ENCODE measurements at regions of chr6 and their contacts with region 1.

Region 1: GRCh38 chr6:112043032-112044007 is 10.6 kb upstream of the CCN6 start:
- DNase-seq: peak; percentile 85 to 95 (median 91)
- ATAC-seq: peak; percentile 92
- H3K4me3 ChIP-seq: peak overlapping the region; percentile 65
- H3K4me3 Mint-ChIP-seq: peak overlapping the region; percentile 97
- H3K27ac ChIP-seq: peak overlapping the region; percentile 88 to 95
- H3K27ac Mint-ChIP-seq: peak overlapping the region; percentile 100
- H3K4me1 ChIP-seq: peaks cover 3% of the 10 kb centered on the region
- H3K4me1 Mint-ChIP-seq: peaks cover 40% of the 10 kb centered on the region
- H3K27me3 ChIP-seq: no peaks in the 10 kb centered on the region
- H3K27me3 Mint-ChIP-seq: no peaks in the 10 kb centered on the region
- CTCF ChIP-seq: peak; percentile 78

Region 2: GRCh38 chr6:110999634-111000270 is 1043.6 kb before region 1 on chr6:
- CTCF ChIA-PET with region 1: no interaction called
- POLR2A ChIA-PET with region 1: no interaction called
- intact Hi-C with region 1: loop called in 1 of 2 experiments (anchors 10 kb)
- DNase-seq: peak in 3 of 14 experiments; percentile 47 to 56 (median 54)
- ATAC-seq: no peak
- H3K4me3 ChIP-seq: no peak overlapping the region
- H3K4me3 Mint-ChIP-seq: no peak overlapping the region
- H3K27ac ChIP-seq: no peak overlapping the region
- H3K27ac Mint-ChIP-seq: no peak overlapping the region
- H3K4me1 ChIP-seq: no peaks in the 10 kb centered on the region
- H3K4me1 Mint-ChIP-seq: no peaks in the 10 kb centered on the region
- H3K27me3 ChIP-seq: no peaks in the 10 kb centered on the region
- H3K27me3 Mint-ChIP-seq: no peaks in the 10 kb centered on the region
- CTCF ChIP-seq: peak; percentile 50

Region 3: DNA sequence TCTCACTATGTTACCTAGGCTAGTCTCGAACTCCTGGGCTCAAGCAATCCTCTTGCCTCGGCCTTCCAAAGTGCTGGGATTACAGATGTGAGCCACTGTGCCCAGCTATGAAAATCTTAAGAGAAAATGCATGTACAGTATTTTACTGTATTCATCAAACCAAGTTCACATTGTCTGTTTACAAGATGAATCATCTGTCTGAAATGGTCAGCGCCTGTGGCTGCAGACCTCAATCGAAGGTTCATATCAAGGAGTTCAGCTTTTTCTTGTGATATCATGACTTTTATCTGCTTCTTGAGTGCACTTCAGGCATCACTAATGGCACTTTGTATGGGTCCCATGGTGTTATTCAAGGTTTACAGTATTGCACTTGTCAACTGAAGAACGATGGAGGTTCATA is 800.9 kb before region 1 on chr6:
- CTCF ChIA-PET with region 1: no interaction called
- POLR2A ChIA-PET with region 1: no interaction called
- intact Hi-C with region 1: no loop called
- DNase-seq: no peak
- ATAC-seq: no peak
- H3K4me3 ChIP-seq: no peak overlapping the region
- H3K4me3 Mint-ChIP-seq: no peak overlapping the region
- H3K27ac ChIP-seq: no peak overlapping the region
- H3K27ac Mint-ChIP-seq: no peak overlapping the region
- H3K4me1 ChIP-seq: no peaks in the 10 kb centered on the region
- H3K4me1 Mint-ChIP-seq: no peaks in the 10 kb centered on the region
- H3K27me3 ChIP-seq: no peaks in the 10 kb centered on the region
- H3K27me3 Mint-ChIP-seq: no peaks in the 10 kb centered on the region
- CTCF ChIP-seq: no peak

Region 4: GRCh38 chr6:111259089-111259831 is 784.1 kb before region 1 on chr6:
- CTCF ChIA-PET with region 1: interaction called, 5 read pairs
- POLR2A ChIA-PET with region 1: interaction called, 19 read pairs
- intact Hi-C with region 1: loop called (anchors 1 kb)
- DNase-seq: peak; percentile 98 to 100 (median 99)
- ATAC-seq: peak; percentile 95
- H3K4me3 ChIP-seq: peak overlapping the region; percentile 60
- H3K4me3 Mint-ChIP-seq: peak overlapping the region; percentile 90
- H3K27ac ChIP-seq: peak overlapping the region; percentile 78 to 89
- H3K27ac Mint-ChIP-seq: peak overlapping the region; percentile 87
- H3K4me1 ChIP-seq: peaks cover 28% of the 10 kb centered on the region
- H3K4me1 Mint-ChIP-seq: peaks cover 35% of the 10 kb centered on the region
- H3K27me3 ChIP-seq: no peaks in the 10 kb centered on the region
- H3K27me3 Mint-ChIP-seq: no peaks in the 10 kb centered on the region
- CTCF ChIP-seq: peak; percentile 96

Region 5: GRCh38 chr6:111764238-111765175 is 278.8 kb before region 1 on chr6:
- CTCF ChIA-PET with region 1: no interaction called
- POLR2A ChIA-PET with region 1: interaction called, 5 read pairs
- intact Hi-C with region 1: loop called in 1 of 2 experiments (anchors 5 kb)
- DNase-seq: peak in 10 of 14 experiments; percentile 25 to 87 (median 44)
- ATAC-seq: peak; percentile 24
- H3K4me3 ChIP-seq: peak overlapping the region; percentile 19
- H3K4me3 Mint-ChIP-seq: peak overlapping the region; percentile 83
- H3K27ac ChIP-seq: peak overlapping the region; percentile 70 to 71
- H3K27ac Mint-ChIP-seq: peak overlapping the region; percentile 99
- H3K4me1 ChIP-seq: peaks cover 89% of the 10 kb centered on the region
- H3K4me1 Mint-ChIP-seq: peaks cover 99% of the 10 kb centered on the region
- H3K27me3 ChIP-seq: no peaks in the 10 kb centered on the region
- H3K27me3 Mint-ChIP-seq: no peaks in the 10 kb centered on the region
- CTCF ChIP-seq: no peak

Region 6: DNA sequence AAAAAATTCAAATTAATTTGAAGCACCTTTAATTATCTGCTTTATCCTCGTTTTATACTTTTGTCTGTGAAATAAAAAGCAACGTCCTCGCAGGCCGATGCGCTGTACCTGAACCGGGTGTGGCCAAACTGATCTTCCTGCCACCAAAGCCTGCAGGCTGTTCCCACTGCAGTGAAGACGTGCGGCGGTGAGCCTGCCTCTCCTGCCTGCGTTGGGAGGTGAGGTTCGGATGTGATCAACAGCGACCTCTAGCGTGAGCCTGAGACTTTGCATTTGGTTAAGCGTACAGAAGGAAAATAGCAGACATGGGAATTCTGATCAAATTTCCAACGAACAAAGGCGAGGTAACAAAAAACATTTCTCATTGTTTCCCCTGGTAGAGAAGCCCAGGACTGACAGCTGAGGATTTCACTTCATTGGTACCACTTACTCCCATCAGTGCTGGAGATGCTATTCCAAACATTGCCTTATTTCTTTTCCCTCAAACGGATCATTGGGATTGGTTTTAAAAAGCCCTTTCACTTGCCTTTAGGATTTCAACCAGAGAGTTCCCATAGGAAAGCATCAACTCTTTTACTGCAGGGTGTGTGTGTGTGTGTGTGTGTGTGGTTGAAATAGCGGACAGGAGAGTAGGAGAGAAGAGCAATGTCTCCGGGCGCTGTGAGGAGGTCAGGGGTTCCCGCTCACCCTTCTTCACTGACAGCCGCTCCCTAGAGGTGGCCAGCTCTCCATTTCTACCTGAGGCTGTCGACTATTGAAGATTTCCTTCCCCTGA is 46.1 kb before region 1 on chr6:
- CTCF ChIA-PET with region 1: interaction called, 6 read pairs
- POLR2A ChIA-PET with region 1: interaction called, 7 read pairs
- intact Hi-C with region 1: loop called (anchors 1 to 10 kb)
- DNase-seq: peak; percentile 61 to 92 (median 76)
- ATAC-seq: peak; percentile 70
- H3K4me3 ChIP-seq: peak overlapping the region; percentile 8
- H3K4me3 Mint-ChIP-seq: peak overlapping the region; percentile 75
- H3K27ac ChIP-seq: no peak overlapping the region
- H3K27ac Mint-ChIP-seq: peak overlapping the region; percentile 82
- H3K4me1 ChIP-seq: peaks cover 40% of the 10 kb centered on the region
- H3K4me1 Mint-ChIP-seq: peaks cover 55% of the 10 kb centered on the region
- H3K27me3 ChIP-seq: no peaks in the 10 kb centered on the region
- H3K27me3 Mint-ChIP-seq: no peaks in the 10 kb centered on the region
- CTCF ChIP-seq: peak; percentile 93

Region 7: GRCh38 chr6:112087136-112087911 is 44.0 kb after region 1 on chr6 and contains the starts of genes FAM229B and TUBE1:
- CTCF ChIA-PET with region 1: interaction called, 4 read pairs
- POLR2A ChIA-PET with region 1: no interaction called
- intact Hi-C with region 1: loop called in 1 of 2 experiments (anchors 1 kb)
- DNase-seq: peak; percentile 81 to 98 (median 84)
- ATAC-seq: peak; percentile 97
- H3K4me3 ChIP-seq: peak within 1 kb of the TSS; percentile 88
- H3K4me3 Mint-ChIP-seq: no peak within 1 kb of the TSS
- H3K27ac ChIP-seq: peak within 1 kb of the TSS; percentile 60 to 84
- H3K27ac Mint-ChIP-seq: no peak within 1 kb of the TSS
- H3K4me1 ChIP-seq: peaks cover 3% of the 10 kb centered on the region
- H3K4me1 Mint-ChIP-seq: peaks cover 11% of the 10 kb centered on the region
- H3K27me3 ChIP-seq: peaks cover 0 to 6% of the 10 kb centered on the region in 2 experiments
- H3K27me3 Mint-ChIP-seq: peaks cover 28% of the 10 kb centered on the region
- CTCF ChIP-seq: no peak
- total RNA-seq, gene FAM229B: 3.6 to 4.4 TPM
- total RNA-seq, gene TUBE1: 28.2 to 30.8 TPM

Region 8: DNA sequence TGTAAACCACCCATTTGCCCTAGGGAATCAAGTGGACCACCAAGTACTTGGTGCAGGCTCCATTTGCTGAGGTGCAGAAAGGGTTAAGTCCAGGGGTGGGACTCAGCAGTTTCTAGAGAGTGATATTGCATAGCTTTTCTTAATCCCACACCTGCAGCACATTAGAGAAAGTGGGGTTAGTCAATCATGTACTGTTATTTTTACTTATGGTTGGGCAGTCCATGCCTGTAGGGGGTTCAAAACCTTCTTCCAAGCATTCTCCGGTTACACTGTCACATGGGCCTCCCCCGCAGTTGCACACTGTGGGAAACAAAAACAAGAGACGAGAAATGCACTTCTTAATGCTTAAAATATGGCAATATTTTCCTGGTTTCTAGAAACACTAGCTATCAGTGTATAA is 145.6 kb after region 1 on chr6:
- CTCF ChIA-PET with region 1: no interaction called
- POLR2A ChIA-PET with region 1: no interaction called
- intact Hi-C with region 1: no loop called
- DNase-seq: no peak
- ATAC-seq: no peak
- H3K4me3 ChIP-seq: no peak overlapping the region
- H3K4me3 Mint-ChIP-seq: no peak overlapping the region
- H3K27ac ChIP-seq: no peak overlapping the region
- H3K27ac Mint-ChIP-seq: no peak overlapping the region
- H3K4me1 ChIP-seq: no peaks in the 10 kb centered on the region
- H3K4me1 Mint-ChIP-seq: no peaks in the 10 kb centered on the region
- H3K27me3 ChIP-seq: peaks cover 3 to 6% of the 10 kb centered on the region in 2 experiments
- H3K27me3 Mint-ChIP-seq: peaks cover 8% of the 10 kb centered on the region
- CTCF ChIP-seq: no peak